A549 (cell line): ENCODE measurements at regions of chr19 and their contacts with region 1.

Region 1: DNA sequence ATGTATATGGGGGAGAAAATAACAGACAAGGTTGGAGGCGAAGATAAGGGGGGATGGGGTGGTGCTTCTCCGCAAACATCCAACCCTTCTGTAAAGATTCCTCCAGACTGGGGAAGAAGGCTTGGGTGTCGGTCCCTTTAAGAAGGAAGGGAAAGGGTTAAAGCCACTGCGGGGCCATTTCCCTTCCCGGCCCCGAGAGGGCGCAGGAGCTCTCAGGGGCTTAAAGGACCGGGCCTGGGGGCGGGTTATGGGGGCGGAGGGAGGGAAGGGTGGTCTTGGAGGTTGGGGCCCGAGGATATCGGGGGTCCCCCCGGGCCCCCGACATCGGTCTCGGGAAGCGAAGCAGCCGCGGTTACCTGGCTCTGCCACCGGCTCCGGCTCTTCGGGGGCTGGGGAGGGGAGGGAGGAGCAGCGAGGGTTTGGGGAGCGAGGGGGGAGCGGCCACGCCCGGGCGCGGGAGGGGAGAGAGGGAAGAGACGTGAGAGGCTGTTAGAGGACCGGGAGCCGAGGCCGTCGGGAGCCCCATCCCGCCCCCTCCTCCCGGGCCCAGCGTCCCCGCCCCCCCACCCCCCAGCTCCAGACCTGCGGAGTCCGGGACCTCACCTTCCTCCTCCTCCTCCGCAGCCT is 2.8 kb downstream of the TNNT1 start:
- DNase-seq: peak; percentile 85 to 91
- ATAC-seq: peak; percentile 73 to 83
- H3K4me3 ChIP-seq: peak overlapping the region; percentile 64
- H3K27ac ChIP-seq: peak overlapping the region; percentile 82 to 92
- H3K4me1 ChIP-seq: peaks cover 37% of the 10 kb centered on the region
- CTCF ChIP-seq: peak; percentile 94
- EP300 ChIP-seq: no peak
- POLR2A ChIP-seq: no peak
- RAD21 ChIP-seq: peak; percentile 56 to 59

Region 2: DNA sequence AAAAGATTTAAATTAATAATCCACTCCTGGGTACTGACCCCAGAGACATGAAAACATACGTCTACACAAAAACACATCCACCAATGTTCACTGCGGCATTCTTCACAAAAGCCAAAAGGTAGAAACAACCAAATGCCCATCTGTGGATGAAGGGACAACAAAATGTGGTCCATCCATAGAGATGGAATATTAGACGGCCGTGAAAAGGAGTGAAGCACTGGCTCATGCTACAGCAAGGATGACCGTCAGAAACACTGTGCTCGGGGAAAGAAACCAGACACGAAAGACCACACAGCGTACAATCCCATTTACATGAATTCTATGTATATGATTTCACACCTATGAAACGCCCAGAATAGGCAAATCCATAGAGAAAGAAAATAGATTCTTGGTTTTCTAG is 89.4 kb before region 1 on chr19:
- CTCF ChIA-PET with region 1: no interaction called
- POLR2A ChIA-PET with region 1: no interaction called
- DNase-seq: no peak
- ATAC-seq: no peak
- H3K4me3 ChIP-seq: no peak overlapping the region
- H3K27ac ChIP-seq: no peak overlapping the region
- H3K4me1 ChIP-seq: peaks cover 2% of the 10 kb centered on the region; the same call in 2 of the 3 replicates
- CTCF ChIP-seq: no peak
- EP300 ChIP-seq: no peak
- POLR2A ChIP-seq: no peak
- RAD21 ChIP-seq: no peak

Region 3: GRCh38 chr19:55166530-55167268 is 20.5 kb after region 1 on chr19 and contains the start of gene DNAAF3:
- CTCF ChIA-PET with region 1: interaction called, 36 read pairs
- POLR2A ChIA-PET with region 1: interaction called, 9 read pairs
- DNase-seq: peak; percentile 99 to 100
- ATAC-seq: peak; percentile 96 to 97
- H3K4me3 ChIP-seq: peak within 1 kb of the TSS; percentile 64
- H3K27ac ChIP-seq: peak within 1 kb of the TSS; percentile 62 to 81
- H3K4me1 ChIP-seq: peaks cover 10% of the 10 kb centered on the region; the same call in 1 of the 3 replicates
- CTCF ChIP-seq: no peak
- EP300 ChIP-seq: no peak
- POLR2A ChIP-seq: no peak
- RAD21 ChIP-seq: no peak
- polyA plus RNA-seq, gene DNAAF3: 3.1 and 4.0 TPM in 2 replicates

Region 4: DNA sequence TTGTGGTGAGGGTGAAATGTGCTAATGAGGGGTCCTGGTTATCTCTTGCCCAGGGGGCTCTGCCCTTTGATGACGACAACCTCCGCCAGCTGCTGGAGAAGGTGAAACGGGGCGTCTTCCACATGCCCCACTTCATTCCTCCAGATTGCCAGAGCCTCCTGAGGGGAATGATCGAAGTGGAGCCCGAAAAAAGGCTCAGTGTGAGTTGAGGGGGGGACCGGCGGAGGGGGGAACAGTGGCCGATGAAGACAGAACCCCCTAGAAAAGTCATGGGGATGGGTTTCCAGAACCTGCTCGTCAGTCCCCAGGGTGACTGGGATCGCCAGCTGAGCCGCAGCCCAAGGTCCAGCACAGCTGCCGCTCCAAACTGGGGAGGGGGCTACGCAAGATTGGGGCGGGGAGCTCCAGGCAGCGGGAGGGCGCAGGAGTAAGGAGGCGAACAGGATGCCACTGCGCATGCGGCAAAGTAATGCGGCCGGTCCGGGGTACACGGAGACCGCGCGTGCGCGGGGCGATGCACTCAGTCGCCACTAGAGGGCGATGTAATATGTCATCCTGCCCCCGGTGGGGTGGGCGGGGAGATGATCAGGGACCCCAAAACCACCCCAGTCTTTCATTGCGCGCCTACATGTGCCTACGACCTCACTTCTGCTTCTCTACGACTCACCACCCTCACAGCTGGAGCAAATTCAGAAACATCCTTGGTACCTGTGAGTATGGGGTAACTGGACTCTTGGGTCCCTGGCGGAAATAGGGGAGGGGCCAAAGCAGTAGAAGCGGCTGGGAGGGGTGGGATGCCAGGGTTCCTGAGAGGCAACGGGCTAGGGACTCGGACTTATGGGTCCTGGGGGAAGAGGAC is 155.5 kb after region 1 on chr19:
- CTCF ChIA-PET with region 1: interaction called, 14 read pairs
- POLR2A ChIA-PET with region 1: no interaction called
- DNase-seq: peak; percentile 82 to 100
- ATAC-seq: peak; percentile 72 to 88
- H3K4me3 ChIP-seq: peak overlapping the region; percentile 54
- H3K27ac ChIP-seq: peak overlapping the region; percentile 87 to 88
- H3K4me1 ChIP-seq: peaks cover 6% of the 10 kb centered on the region; the same call in 2 of the 3 replicates
- CTCF ChIP-seq: peak; percentile 99
- EP300 ChIP-seq: no peak
- POLR2A ChIP-seq: peak; percentile 56
- RAD21 ChIP-seq: peak; percentile 83 to 92

Region 5: GRCh38 chr19:55369671-55370304 is 223.6 kb after region 1 on chr19:
- CTCF ChIA-PET with region 1: interaction called, 10 read pairs
- POLR2A ChIA-PET with region 1: no interaction called
- DNase-seq: peak; percentile 86 to 98
- ATAC-seq: peak; percentile 45 to 71
- H3K4me3 ChIP-seq: peak overlapping the region; percentile 85
- H3K27ac ChIP-seq: peak overlapping the region; percentile 91 to 96
- H3K4me1 ChIP-seq: peaks cover 61% of the 10 kb centered on the region
- CTCF ChIP-seq: no peak
- EP300 ChIP-seq: no peak
- POLR2A ChIP-seq: no peak
- RAD21 ChIP-seq: no peak

Region 6: DNA sequence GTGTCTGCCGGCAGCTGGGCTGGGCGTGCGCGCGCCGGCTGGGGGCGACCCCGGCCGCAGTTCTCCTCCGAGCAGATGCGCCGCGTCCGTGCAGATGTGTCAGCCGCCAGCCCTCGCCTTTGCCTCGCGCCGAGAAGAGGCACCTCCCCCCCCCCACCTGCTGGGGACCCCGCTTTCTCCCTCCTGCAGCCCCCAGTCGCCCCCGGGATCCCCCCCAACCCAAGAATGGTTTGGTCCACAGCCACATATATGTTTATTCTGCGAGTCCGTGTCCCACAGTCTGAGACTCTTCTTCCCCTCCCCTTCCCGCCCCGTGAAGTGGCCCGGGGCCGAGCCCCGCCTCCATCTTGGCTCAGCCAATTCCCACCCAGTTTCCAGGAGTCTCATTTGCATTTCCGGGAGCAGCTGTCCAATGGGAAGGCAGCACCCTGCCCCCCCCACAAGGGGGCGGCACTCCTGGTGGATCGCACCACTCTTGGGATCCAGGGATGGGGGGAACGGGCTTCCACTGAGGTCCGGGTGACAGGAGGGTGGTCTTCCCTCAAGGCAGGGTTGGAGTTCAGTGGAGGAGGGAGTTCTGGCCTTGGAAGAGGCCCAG is 306.7 kb after region 1 on chr19:
- CTCF ChIA-PET with region 1: interaction called, 12 read pairs
- POLR2A ChIA-PET with region 1: no interaction called
- DNase-seq: peak; percentile 66 to 80
- ATAC-seq: peak in 1 of 2 experiments; percentile 63; a peak in 3 of 6 replicates
- H3K4me3 ChIP-seq: no peak overlapping the region
- H3K27ac ChIP-seq: no peak overlapping the region
- H3K4me1 ChIP-seq: peaks cover 31% of the 10 kb centered on the region
- CTCF ChIP-seq: no peak
- EP300 ChIP-seq: no peak
- POLR2A ChIP-seq: no peak
- RAD21 ChIP-seq: no peak

Region 7: GRCh38 chr19:55503502-55504251 is 357.5 kb after region 1 on chr19:
- CTCF ChIA-PET with region 1: interaction called, 40 read pairs
- POLR2A ChIA-PET with region 1: interaction called, 4 read pairs
- DNase-seq: peak; percentile 95 to 96
- ATAC-seq: peak; percentile 82 to 92
- H3K4me3 ChIP-seq: peak overlapping the region; percentile 31
- H3K27ac ChIP-seq: peak overlapping the region; percentile 50 to 75; a peak in 4 of 6 replicates
- H3K4me1 ChIP-seq: no peaks in the 10 kb centered on the region
- CTCF ChIP-seq: peak; percentile 95
- EP300 ChIP-seq: no peak
- POLR2A ChIP-seq: no peak
- RAD21 ChIP-seq: peak; percentile 93 to 94